ENCODE measurements at regions of chr11 and their contacts with region 1.

Region 1: GRCh38 chr11:83162377-83162776 is 5.4 kb downstream of the PCF11 start:
- DNase-seq: no peak
- H3K4me3 Mint-ChIP-seq: peak overlapping the region; percentile 98
- H3K27ac Mint-ChIP-seq: no peak overlapping the region
- H3K4me1 Mint-ChIP-seq: peaks cover 14% of the 10 kb centered on the region
- H3K27me3 Mint-ChIP-seq: no peaks in the 10 kb centered on the region
- CTCF ChIP-seq: no peak

Region 2: GRCh38 chr11:82610671-82611070 is 551.7 kb before region 1 on chr11:
- CTCF ChIA-PET with region 1: no interaction called
- POLR2A ChIA-PET with region 1: no interaction called
- intact Hi-C with region 1: no loop called
- DNase-seq: no peak
- H3K4me3 Mint-ChIP-seq: no peak overlapping the region
- H3K27ac Mint-ChIP-seq: no peak overlapping the region
- H3K4me1 Mint-ChIP-seq: no peaks in the 10 kb centered on the region
- H3K27me3 Mint-ChIP-seq: peaks cover 64% of the 10 kb centered on the region
- CTCF ChIP-seq: no peak

Region 3: GRCh38 chr11:82906244-82906654 is 256.1 kb before region 1 on chr11:
- CTCF ChIA-PET with region 1: interaction called, 6 read pairs
- POLR2A ChIA-PET with region 1: interaction called, 126 read pairs
- intact Hi-C with region 1: loop called (anchors 1 kb)
- DNase-seq: peak; percentile 40
- H3K4me3 Mint-ChIP-seq: peak overlapping the region; percentile 37
- H3K27ac Mint-ChIP-seq: peak overlapping the region; percentile 40
- H3K4me1 Mint-ChIP-seq: peaks cover 34% of the 10 kb centered on the region
- H3K27me3 Mint-ChIP-seq: no peaks in the 10 kb centered on the region
- CTCF ChIP-seq: peak; percentile 46

Region 4: DNA sequence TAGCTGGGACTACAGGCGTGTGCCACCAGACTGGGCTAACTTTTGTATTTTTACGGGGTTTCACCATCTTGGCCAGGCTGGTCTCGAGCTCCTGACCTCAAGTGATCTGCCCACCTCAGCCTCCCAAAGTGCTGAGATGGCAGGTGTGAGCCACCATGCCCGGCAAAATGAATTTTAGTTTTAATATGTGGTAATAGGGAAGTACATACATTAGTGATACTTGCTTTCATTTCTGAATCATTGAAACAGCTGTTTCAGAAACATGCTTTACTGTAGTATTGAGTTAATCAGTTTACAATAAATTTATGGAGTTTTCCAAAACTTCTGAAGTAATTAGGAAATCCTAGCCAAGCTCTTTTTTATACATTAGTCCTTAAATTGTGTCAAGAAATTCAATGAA is 10.2 kb after region 1 on chr11:
- CTCF ChIA-PET with region 1: interaction called, 5 read pairs
- POLR2A ChIA-PET with region 1: interaction called, 48 read pairs
- intact Hi-C with region 1: no loop called
- DNase-seq: no peak
- H3K4me3 Mint-ChIP-seq: no peak overlapping the region
- H3K27ac Mint-ChIP-seq: no peak overlapping the region
- H3K4me1 Mint-ChIP-seq: peaks cover 31% of the 10 kb centered on the region
- H3K27me3 Mint-ChIP-seq: no peaks in the 10 kb centered on the region
- CTCF ChIP-seq: no peak

Region 5: GRCh38 chr11:83187465-83187864 is 25.1 kb after region 1 on chr11:
- CTCF ChIA-PET with region 1: interaction called, 4 read pairs
- POLR2A ChIA-PET with region 1: interaction called, 52 read pairs
- intact Hi-C with region 1: loop called (anchors 2 kb)
- DNase-seq: no peak
- H3K4me3 Mint-ChIP-seq: no peak overlapping the region
- H3K27ac Mint-ChIP-seq: no peak overlapping the region
- H3K4me1 Mint-ChIP-seq: peaks cover 9% of the 10 kb centered on the region
- H3K27me3 Mint-ChIP-seq: no peaks in the 10 kb centered on the region
- CTCF ChIP-seq: no peak

Measured in MCF 10A (cell line).